ENCODE measurements at regions of chr17 and their contacts with region 1.

Region 1: DNA sequence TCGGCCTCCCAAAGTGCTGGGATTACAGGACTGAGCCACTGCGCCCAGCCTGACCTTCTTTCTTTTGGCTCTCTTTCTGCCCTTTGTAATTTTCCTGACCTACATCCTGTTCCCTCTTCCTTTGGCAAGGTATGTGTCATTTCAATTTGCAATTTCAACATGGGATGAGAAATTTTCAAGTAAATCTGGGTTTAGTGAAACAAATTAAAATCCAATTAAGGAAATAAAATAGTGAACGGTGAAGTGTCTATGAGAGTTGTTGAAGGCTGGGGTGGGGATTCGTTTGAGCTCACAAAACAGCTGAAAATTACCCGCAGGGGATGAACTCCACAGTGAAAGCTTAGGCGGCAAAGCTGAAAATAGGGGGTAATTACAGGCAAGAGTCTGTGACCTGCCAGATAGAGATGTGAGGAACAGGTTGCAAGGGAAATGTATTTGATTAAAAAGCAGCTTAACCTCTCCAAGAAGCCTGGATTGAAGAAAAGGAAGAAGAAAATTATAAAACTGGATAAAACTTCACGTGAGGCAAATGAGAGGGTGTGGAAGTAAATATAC is 277.7 kb downstream of the UTP18 start:
- DNase-seq: no peak
- H3K4me3 ChIP-seq: no peak overlapping the region
- H3K27ac ChIP-seq: no peak overlapping the region
- H3K4me1 ChIP-seq: no peaks in the 10 kb centered on the region
- H3K27me3 ChIP-seq: no peaks in the 10 kb centered on the region
- CTCF ChIP-seq: no peak
- EP300 ChIP-seq: no peak
- POLR2A ChIP-seq: no peak

Region 2: GRCh38 chr17:51287412-51287811 is 250.7 kb before region 1 on chr17:
- intact Hi-C with region 1: no loop called
- DNase-seq: no peak
- H3K4me3 ChIP-seq: no peak overlapping the region
- H3K27ac ChIP-seq: no peak overlapping the region
- H3K4me1 ChIP-seq: peaks cover 0 to 32% (median 19%) of the 10 kb centered on the region in 4 donors
- H3K27me3 ChIP-seq: no peaks in the 10 kb centered on the region
- CTCF ChIP-seq: no peak
- EP300 ChIP-seq: no peak
- POLR2A ChIP-seq: no peak

Region 3: GRCh38 chr17:51298508-51299371 is 239.3 kb before region 1 on chr17:
- intact Hi-C with region 1: loop called (anchors 5 kb)
- DNase-seq: no peak
- H3K4me3 ChIP-seq: no peak overlapping the region
- H3K27ac ChIP-seq: peak overlapping the region in 1 of 4 donors; percentile 0
- H3K4me1 ChIP-seq: peaks cover 0 to 31% (median 20%) of the 10 kb centered on the region in 4 donors
- H3K27me3 ChIP-seq: no peaks in the 10 kb centered on the region
- CTCF ChIP-seq: peak; percentile 61 to 73 (median 72)
- EP300 ChIP-seq: no peak
- POLR2A ChIP-seq: no peak